ENCODE measurements at regions of chr1 and their contacts with region 1.

Region 1: DNA sequence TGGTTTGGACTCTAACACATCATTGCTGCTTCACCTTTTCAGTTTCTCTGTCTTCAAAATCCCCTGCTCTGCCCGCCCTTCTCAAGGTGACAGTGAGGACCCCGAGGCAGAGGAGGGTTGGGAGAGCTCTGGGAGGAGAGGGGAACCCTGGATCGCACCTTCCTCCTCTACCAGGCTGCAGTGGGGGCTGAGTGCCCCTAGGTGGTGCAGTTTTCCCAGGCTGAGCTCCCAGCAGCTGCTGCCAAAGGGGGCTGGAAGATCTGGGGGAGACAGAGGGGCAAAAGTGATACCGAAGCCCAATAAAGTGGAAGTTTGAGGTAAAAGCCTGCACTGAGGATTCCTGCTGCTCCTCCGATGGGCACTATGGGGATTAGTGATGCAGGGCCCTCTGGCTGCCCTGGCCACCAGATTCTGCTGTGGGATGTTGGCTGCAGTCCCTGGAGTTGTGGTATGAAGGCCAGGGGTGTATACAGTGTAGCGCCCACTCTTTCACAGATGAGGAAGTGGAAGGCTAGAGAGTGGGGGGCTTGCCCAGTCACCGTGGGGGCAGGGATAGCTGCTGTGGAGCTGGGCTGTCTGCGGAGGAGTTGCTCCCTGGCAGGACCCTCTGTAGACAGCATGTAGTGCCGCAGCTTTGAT is 40.7 kb upstream of the SCMH1 start:
- DNase-seq: peak; percentile 13
- ATAC-seq: peak; percentile 96
- H3K4me3 ChIP-seq: no peak overlapping the region
- H3K27ac ChIP-seq: no peak overlapping the region
- H3K4me1 ChIP-seq: no peaks in the 10 kb centered on the region
- H3K27me3 ChIP-seq: peaks cover 67% of the 10 kb centered on the region
- CTCF ChIP-seq: peak; percentile 68
- POLR2A ChIP-seq: no peak
- RAD21 ChIP-seq: peak; percentile 77

Region 2: DNA sequence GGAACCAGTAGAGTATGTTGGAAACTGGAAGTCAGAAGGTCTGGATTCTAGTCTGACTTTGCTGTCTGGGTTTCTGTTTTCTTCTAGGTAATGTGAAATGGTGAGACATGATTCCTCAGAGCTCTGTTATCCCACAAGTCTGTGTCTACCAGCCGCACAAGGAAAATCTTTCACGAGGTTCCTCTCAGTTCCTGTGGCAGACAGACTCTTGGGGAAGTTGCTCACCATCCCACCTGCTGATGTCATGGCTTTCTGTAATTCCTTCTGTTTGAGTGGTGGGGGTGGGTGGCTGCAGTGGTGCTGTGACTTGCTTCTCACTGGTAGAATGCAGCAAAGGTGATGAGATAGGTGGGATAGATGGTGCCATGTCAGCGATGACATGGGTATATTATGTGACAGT is 23.6 kb before region 1 on chr1:
- CTCF ChIA-PET with region 1: interaction called, 11 read pairs
- POLR2A ChIA-PET with region 1: no interaction called
- dilution Hi-C with region 1: no loop called
- in situ Hi-C with region 1: no loop called
- intact Hi-C with region 1: no loop called
- DNase-seq: no peak
- ATAC-seq: no peak
- H3K4me3 ChIP-seq: no peak overlapping the region
- H3K27ac ChIP-seq: no peak overlapping the region
- H3K4me1 ChIP-seq: no peaks in the 10 kb centered on the region; the same call in 1 of the 2 replicates
- H3K27me3 ChIP-seq: peaks cover 2% of the 10 kb centered on the region; the same call in 1 of the 2 replicates
- CTCF ChIP-seq: no peak
- POLR2A ChIP-seq: no peak
- RAD21 ChIP-seq: no peak

Region 3: DNA sequence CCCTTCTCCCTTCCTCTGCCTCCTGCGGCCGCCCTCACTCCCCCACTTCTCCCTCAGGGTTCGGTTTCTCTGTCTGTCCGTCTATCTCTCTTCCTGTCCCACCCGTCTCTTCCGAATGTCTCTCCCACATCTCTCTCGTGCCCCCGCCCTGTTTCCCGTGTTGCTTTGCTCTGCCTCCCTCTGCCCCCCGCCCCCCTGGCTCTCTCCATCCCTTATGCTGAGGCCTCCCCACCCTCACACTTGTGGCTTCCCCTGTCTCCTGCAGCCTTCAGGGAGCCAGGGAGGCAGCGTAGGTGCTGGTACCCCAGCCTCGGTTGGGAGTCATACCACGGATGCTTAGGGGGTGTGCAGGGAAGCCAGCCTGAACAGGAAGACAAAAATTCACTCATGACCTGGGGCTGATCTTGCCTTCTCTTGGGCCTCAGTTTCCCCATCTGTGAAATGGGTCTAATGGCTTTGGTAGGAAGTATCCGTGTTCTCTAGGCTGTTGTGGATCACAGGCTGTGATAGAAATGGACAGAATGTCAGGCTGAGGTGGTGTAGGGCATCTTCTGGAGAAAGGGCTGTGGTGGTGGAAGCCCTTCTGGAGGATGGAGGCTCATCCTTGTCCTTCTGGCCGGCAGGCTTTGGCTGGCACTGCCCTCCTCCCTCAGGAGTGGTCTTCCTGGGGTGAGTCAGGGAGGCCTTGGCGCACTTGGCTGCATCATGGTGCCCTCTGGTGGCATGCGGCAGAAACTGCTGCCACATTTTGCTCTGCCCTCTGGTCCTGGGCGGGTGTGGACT is 133.9 kb after region 1 on chr1:
- CTCF ChIA-PET with region 1: interaction called, 10 read pairs
- POLR2A ChIA-PET with region 1: no interaction called
- dilution Hi-C with region 1: no loop called
- in situ Hi-C with region 1: no loop called
- intact Hi-C with region 1: loop called (anchors 1 kb)
- DNase-seq: peak; percentile 66
- ATAC-seq: peak; percentile 76
- H3K4me3 ChIP-seq: no peak overlapping the region
- H3K27ac ChIP-seq: no peak overlapping the region
- H3K4me1 ChIP-seq: peaks cover 2% of the 10 kb centered on the region; the same call in 1 of the 2 replicates
- H3K27me3 ChIP-seq: peaks cover 19% of the 10 kb centered on the region
- CTCF ChIP-seq: peak; percentile 90
- POLR2A ChIP-seq: no peak
- RAD21 ChIP-seq: peak; percentile 91

Region 4: DNA sequence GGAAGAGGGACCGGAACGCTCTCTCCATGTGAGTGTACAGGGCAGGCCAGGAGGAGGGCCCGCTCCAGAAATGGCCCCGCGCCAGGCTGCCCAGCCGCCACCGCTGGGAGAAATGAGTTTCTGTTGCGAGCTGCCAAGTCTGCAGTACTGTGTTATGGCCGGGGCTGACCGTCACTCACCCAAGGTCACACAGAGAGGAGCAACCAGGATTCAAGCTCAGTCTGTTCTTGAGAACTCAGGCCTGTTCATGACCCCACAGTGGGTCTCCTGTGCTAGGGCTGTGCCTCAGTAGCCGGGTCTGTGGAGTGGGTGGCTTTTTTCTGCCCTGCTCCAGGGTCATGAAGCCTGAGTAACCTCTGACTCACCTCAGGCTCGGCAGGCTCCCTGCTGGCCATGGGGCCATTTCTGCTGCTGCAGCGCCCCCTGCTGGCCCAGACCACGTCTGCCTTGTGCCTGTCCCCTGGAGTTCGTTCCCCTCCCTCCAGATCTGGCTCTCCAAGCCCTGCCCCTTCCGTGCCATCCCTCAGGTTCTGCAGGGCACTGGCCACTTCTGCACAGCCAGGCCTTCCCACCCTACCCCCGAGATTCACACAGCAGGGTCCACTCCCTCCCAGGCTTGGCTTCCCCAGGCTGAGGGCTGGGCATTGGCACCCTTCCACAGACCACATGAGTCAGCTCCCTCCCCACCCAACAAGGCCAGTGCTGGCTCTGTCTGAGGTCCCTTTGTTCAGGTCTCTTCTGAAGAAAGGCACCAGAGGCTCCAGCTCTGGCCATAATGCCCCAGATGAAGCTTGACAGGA is 149.9 kb after region 1 on chr1:
- CTCF ChIA-PET with region 1: interaction called, 3 read pairs
- POLR2A ChIA-PET with region 1: no interaction called
- dilution Hi-C with region 1: no loop called
- in situ Hi-C with region 1: no loop called
- intact Hi-C with region 1: loop called (anchors 1 kb)
- DNase-seq: peak; percentile 76
- ATAC-seq: peak; percentile 87
- H3K4me3 ChIP-seq: no peak overlapping the region
- H3K27ac ChIP-seq: no peak overlapping the region
- H3K4me1 ChIP-seq: peaks cover 8% of the 10 kb centered on the region
- H3K27me3 ChIP-seq: peaks cover 33% of the 10 kb centered on the region
- CTCF ChIP-seq: peak; percentile 80
- POLR2A ChIP-seq: no peak
- RAD21 ChIP-seq: peak; percentile 71

Region 5: DNA sequence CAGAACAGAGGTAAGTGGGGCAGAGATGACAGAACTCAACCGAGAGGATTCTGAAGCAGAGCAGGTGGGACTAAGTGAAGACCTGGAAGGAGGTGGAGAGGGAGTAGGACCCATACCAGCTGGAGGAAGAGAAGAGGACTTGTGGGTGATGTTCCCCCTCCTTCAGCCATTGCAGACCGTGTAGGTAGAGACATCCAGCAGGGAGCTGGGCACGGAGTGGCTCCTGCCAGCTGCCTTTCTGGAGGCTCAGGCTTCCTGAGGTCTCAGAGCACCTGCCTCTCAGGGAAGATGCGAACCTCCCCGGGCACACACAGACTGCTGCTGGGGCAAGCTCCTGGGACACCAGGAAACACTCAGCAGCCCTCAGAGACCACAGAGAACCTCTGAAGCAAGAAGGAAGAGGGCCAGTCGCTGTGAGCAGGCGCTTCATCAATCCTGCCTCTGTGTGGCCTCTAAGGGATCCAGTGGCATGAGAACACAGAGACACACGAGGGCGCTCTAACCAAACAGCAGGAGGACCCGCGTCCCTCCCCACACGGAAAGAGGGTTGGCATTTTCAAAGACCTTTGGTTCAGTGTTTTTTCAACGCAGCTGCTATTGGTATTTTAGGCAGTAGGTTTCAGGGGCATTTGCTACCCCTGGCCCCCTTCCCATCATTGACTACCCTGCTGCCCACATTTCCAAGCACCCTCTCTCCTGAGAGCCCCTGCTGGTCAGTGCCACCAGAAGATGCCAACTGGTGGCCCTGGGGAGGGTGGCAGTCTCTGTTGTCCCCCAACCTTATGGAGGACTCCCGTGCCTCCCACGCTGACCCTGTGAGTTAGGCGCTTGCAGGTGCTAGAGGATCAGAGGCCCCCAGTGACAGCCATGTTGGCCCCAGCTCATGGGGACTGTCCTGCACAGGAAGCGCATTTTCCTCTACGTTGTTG is 291.3 kb after region 1 on chr1:
- CTCF ChIA-PET with region 1: no interaction called
- POLR2A ChIA-PET with region 1: no interaction called
- dilution Hi-C with region 1: no loop called
- in situ Hi-C with region 1: no loop called
- intact Hi-C with region 1: no loop called
- DNase-seq: peak; percentile 80
- ATAC-seq: peak; percentile 99
- H3K4me3 ChIP-seq: no peak overlapping the region
- H3K27ac ChIP-seq: no peak overlapping the region
- H3K4me1 ChIP-seq: no peaks in the 10 kb centered on the region
- H3K27me3 ChIP-seq: no peaks in the 10 kb centered on the region
- CTCF ChIP-seq: peak; percentile 99
- POLR2A ChIP-seq: peak; percentile 57; the same call in 1 of the 2 replicates
- RAD21 ChIP-seq: peak; percentile 100